ENCODE measurements at regions of chr17 and their contacts with region 1.

Region 1: GRCh38 chr17:61399131-61400057 is at the start of gene TBX2:
- DNase-seq: peak; percentile 88
- H3K4me3 Mint-ChIP-seq: peak within 1 kb of the TSS; percentile 76
- H3K27ac Mint-ChIP-seq: no peak within 1 kb of the TSS
- H3K4me1 Mint-ChIP-seq: no peaks in the 10 kb centered on the region
- H3K27me3 Mint-ChIP-seq: no peaks in the 10 kb centered on the region
- CTCF ChIP-seq: no peak
- total RNA-seq, gene TBX2: 1.5 and 4.3 TPM in 2 replicates

Region 2: GRCh38 chr17:60677308-60678124 is 721.9 kb before region 1 on chr17 and contains the start of gene BCAS3:
- CTCF ChIA-PET with region 1: no interaction called
- POLR2A ChIA-PET with region 1: interaction called, 11 read pairs
- intact Hi-C with region 1: no loop called
- DNase-seq: peak; percentile 99
- H3K4me3 Mint-ChIP-seq: peak within 1 kb of the TSS; percentile 98
- H3K27ac Mint-ChIP-seq: peak within 1 kb of the TSS; percentile 98
- H3K4me1 Mint-ChIP-seq: no peaks in the 10 kb centered on the region
- H3K27me3 Mint-ChIP-seq: no peaks in the 10 kb centered on the region
- CTCF ChIP-seq: no peak
- total RNA-seq, gene BCAS3: 14.6 and 19.6 TPM in 2 replicates

Region 3: DNA sequence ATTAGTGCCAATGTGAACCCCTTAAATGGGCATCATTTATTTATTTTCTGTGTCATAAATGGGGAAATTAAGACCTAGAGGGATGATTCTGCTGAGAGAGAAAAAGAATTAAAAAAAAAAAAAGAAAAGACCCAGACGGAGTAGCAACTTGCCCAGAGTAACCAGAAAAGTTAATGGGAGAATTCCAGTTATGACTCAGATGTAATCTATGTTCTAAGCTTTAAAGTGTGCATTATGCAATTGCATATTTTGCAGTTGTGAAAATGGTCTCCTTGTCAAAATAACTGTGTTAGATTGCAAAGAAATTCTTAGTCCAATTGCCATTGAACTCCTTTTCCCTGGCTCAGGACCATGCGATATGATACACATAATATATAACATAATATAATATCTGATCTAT is 38.3 kb before region 1 on chr17:
- CTCF ChIA-PET with region 1: no interaction called
- POLR2A ChIA-PET with region 1: interaction called, 10 read pairs
- intact Hi-C with region 1: no loop called
- DNase-seq: peak; percentile 74
- H3K4me3 Mint-ChIP-seq: no peak overlapping the region
- H3K27ac Mint-ChIP-seq: peak overlapping the region; percentile 78
- H3K4me1 Mint-ChIP-seq: peaks cover 25% of the 10 kb centered on the region
- H3K27me3 Mint-ChIP-seq: no peaks in the 10 kb centered on the region
- CTCF ChIP-seq: no peak